Activated CD4-positive, alpha-beta memory T cell treated with anti-CD3 and anti-CD28 coated beads, Interleukin-2, amount 10 ng/mL, durations not matched to agents 7 days and 5 days (primary cell): ENCODE measurements at regions of chr1 and their contacts with region 1.

Region 1: GRCh38 chr1:43763497-43763973 is 56.2 kb downstream of the ST3GAL3 start:
- DNase-seq: peak; percentile 52
- H3K4me3 Mint-ChIP-seq: no peak overlapping the region
- H3K27ac Mint-ChIP-seq: no peak overlapping the region
- H3K4me1 Mint-ChIP-seq: no peaks in the 10 kb centered on the region
- H3K27me3 Mint-ChIP-seq: no peaks in the 10 kb centered on the region

Region 2: DNA sequence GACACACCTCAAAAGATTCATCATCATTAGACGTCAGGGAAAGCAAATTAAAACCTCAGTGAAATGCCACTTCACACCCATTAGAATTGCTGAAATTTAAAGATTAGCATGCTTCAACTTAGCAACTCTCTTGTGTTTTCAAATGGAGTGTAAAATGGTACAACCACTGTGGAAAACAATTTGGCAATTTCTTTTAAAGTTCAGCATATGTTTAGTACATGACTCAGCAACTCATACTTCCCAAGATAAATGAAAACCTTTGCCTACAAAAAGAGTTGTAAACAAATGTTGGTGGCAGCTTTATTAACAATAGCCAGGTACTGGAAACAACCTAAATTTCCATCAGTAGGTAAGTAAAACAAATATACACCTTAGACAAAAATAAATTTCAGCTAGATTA is 13.5 kb before region 1 on chr1:
- CTCF ChIA-PET with region 1: interaction called, 13 read pairs
- POLR2A ChIA-PET with region 1: no interaction called
- DNase-seq: no peak
- H3K4me3 Mint-ChIP-seq: no peak overlapping the region
- H3K27ac Mint-ChIP-seq: no peak overlapping the region
- H3K4me1 Mint-ChIP-seq: no peaks in the 10 kb centered on the region
- H3K27me3 Mint-ChIP-seq: no peaks in the 10 kb centered on the region

Region 3: GRCh38 chr1:43832255-43832654 is 68.7 kb after region 1 on chr1:
- CTCF ChIA-PET with region 1: interaction called, 13 read pairs
- POLR2A ChIA-PET with region 1: no interaction called
- DNase-seq: peak; percentile 20
- H3K4me3 Mint-ChIP-seq: no peak overlapping the region
- H3K27ac Mint-ChIP-seq: peak overlapping the region; percentile 3
- H3K4me1 Mint-ChIP-seq: peaks cover 37% of the 10 kb centered on the region
- H3K27me3 Mint-ChIP-seq: no peaks in the 10 kb centered on the region

Region 4: GRCh38 chr1:43946236-43947060 is 182.9 kb after region 1 on chr1 and contains the start of gene IPO13:
- CTCF ChIA-PET with region 1: interaction called, 32 read pairs
- POLR2A ChIA-PET with region 1: no interaction called
- DNase-seq: peak; percentile 96
- H3K4me3 Mint-ChIP-seq: peak within 1 kb of the TSS; percentile 89
- H3K27ac Mint-ChIP-seq: peak within 1 kb of the TSS; percentile 88
- H3K4me1 Mint-ChIP-seq: peaks cover 44% of the 10 kb centered on the region
- H3K27me3 Mint-ChIP-seq: no peaks in the 10 kb centered on the region
- total RNA-seq, gene IPO13: 21.5 to 23.5 TPM

Region 5: GRCh38 chr1:44049839-44050238 is 286.3 kb after region 1 on chr1:
- CTCF ChIA-PET with region 1: interaction called, 29 read pairs
- POLR2A ChIA-PET with region 1: no interaction called
- DNase-seq: no peak
- H3K4me3 Mint-ChIP-seq: no peak overlapping the region
- H3K27ac Mint-ChIP-seq: no peak overlapping the region
- H3K4me1 Mint-ChIP-seq: peaks cover 18% of the 10 kb centered on the region
- H3K27me3 Mint-ChIP-seq: peaks cover 6% of the 10 kb centered on the region